ENCODE measurements at regions of chr6 and their contacts with region 1.

Region 1: GRCh38 chr6:24387818-24388217 is 14.9 kb upstream of the MRS2 start:
- DNase-seq: no peak
- ATAC-seq: no peak

Region 2: GRCh38 chr6:24283043-24283985 is 104.5 kb before region 1 on chr6:
- intact Hi-C with region 1: loop called (anchors 2 kb)
- DNase-seq: peak; percentile 65
- ATAC-seq: peak; percentile 92

Measured in Right ventricle myocardium inferior (tissue), 1 donor.